Gastrocnemius medialis (tissue), 4 donors: ENCODE measurements at regions of chr2 and their contacts with region 1.

Region 1: DNA sequence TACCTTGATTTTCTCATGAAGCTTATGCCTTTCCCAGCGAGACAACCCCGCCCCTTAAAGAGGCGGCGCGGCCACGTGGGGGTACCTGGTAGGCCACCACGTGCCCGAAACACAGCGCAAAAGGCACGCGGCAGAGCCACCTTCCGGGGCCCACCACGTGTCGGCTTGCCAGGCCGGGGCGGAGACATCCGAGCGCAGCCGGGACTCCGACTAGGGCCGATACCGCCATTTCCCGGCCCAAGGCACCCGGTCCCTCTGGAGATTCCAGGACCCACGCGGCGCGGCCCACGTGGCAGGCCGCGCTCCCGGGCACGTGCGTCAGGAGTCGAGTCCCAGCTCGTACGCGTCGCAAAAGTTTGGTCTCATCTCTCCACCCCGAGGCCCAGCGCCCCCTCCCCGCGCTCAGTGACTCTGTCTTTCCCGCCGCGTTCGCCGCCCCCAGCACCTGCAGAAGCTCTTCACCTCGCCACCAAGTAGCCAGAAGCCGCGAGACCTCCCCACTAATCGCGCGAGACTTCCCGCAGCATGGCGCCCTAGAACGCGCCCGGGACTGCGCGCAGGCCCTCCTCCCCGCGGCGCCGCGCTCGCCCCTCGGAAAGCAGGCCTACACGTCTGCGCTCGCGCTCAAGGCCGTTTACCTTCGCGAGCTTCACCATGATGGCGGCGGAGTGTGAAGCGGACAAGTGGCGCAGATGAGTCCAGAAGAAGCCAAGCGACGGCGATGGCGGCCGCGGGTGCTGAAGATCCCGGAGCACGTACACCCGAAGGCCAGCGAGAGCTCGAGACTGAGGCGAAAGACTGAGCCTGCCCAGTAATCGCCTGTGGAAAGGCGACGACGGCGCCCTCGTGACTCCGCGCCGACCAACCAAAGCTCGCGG is at the start of gene NCL:
- DNase-seq: peak; percentile 66 to 81
- ATAC-seq: peak; percentile 90 to 92
- H3K4me3 ChIP-seq: peak within 1 kb of the TSS; percentile 75 to 99 (median 96)
- H3K27ac ChIP-seq: peak within 1 kb of the TSS; percentile 94 to 98 (median 96)
- H3K4me1 ChIP-seq: peaks cover 26 to 31% of the 10 kb centered on the region in 2 donors
- H3K27me3 ChIP-seq: no peaks in the 10 kb centered on the region
- CTCF ChIP-seq: no peak
- POLR2A ChIP-seq: peak; percentile 98
- total RNA-seq, gene NCL: 48.8 to 174 (median 124) TPM

Region 2: GRCh38 chr2:231056453-231057424 is 407.2 kb before region 1 on chr2 and contains the start of gene PSMD1:
- in situ Hi-C with region 1: no loop called
- intact Hi-C with region 1: loop called (anchors 5 kb)
- DNase-seq: peak; percentile 86 to 90
- ATAC-seq: peak; percentile 91 to 92
- H3K4me3 ChIP-seq: peak within 1 kb of the TSS; percentile 94 to 98 (median 96)
- H3K27ac ChIP-seq: peak within 1 kb of the TSS; percentile 93 to 96 (median 94)
- H3K4me1 ChIP-seq: peaks cover 41 to 49% of the 10 kb centered on the region in 2 donors
- H3K27me3 ChIP-seq: no peaks in the 10 kb centered on the region
- CTCF ChIP-seq: peak; percentile 88 to 96 (median 95)
- POLR2A ChIP-seq: peak; percentile 68 to 70
- total RNA-seq, gene PSMD1: 169 to 189 (median 182) TPM

Region 3: DNA sequence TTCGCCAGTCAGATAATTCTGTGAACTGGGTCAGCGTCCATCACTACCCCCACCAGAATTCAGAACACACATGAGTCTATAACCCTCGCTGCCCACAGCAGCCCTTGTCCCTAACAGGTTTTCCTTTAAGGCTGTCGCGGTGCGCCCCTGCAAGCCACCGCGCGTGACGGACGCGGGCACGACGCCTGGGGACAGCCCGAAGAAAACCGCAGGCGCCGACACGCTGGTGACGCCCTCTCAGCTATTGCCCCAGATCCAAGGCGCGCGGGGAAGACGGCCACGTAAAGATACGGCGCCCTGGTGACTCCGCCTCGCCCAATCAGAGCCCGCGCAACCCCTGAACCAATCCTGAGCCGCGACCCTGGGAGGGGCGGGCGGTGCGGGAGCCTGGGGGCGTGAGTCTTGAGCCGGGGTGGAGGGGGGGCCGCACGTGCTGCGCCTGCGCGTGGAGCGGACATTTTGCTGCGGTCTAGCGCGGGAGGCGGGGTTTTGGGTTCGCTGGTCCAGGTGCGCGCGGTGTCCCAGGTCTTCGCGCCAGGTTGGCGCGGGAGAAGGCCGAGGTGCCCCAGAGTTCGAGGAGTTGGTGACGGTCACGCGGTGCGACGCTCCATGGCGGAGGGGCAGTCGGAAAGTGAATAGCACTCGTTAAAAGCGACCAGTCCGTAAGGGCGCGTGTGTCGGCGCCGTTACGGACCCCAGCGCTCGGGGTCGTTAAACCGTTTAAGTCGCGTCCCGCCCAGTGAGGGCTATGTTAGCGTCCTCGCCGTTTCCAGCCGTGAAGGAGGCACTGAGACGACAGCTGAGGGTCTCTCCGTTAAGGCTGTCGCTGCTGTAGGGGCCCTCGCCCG is 50.4 kb after region 1 on chr2:
- in situ Hi-C with region 1: no loop called
- intact Hi-C with region 1: loop called (anchors 1 kb)
- DNase-seq: peak; percentile 98 to 99
- ATAC-seq: peak; percentile 93 to 95
- H3K4me3 ChIP-seq: peak overlapping the region; percentile 75 to 97 (median 89)
- H3K27ac ChIP-seq: peak overlapping the region; percentile 92 to 99 (median 96)
- H3K4me1 ChIP-seq: peaks cover 6 to 21% of the 10 kb centered on the region in 2 donors
- H3K27me3 ChIP-seq: no peaks in the 10 kb centered on the region
- CTCF ChIP-seq: no peak
- POLR2A ChIP-seq: peak; percentile 90 to 91

Region 4: GRCh38 chr2:231780909-231781797 is 317.2 kb after region 1 on chr2 and contains the start of gene PDE6D:
- in situ Hi-C with region 1: loop called in 1 of 4 experiments (anchors 10 kb)
- intact Hi-C with region 1: loop called (anchors 2 kb)
- DNase-seq: peak; percentile 97 to 99
- ATAC-seq: peak; percentile 98 to 99
- H3K4me3 ChIP-seq: peak within 1 kb of the TSS; percentile 75 to 99 (median 92)
- H3K27ac ChIP-seq: peak within 1 kb of the TSS; percentile 84 to 91 (median 90)
- H3K4me1 ChIP-seq: peaks cover 34 to 44% of the 10 kb centered on the region in 2 donors
- H3K27me3 ChIP-seq: no peaks in the 10 kb centered on the region
- CTCF ChIP-seq: no peak
- POLR2A ChIP-seq: peak; percentile 90 to 97
- total RNA-seq, gene PDE6D: 11.7 to 22.6 (median 17.6) TPM

Region 5: DNA sequence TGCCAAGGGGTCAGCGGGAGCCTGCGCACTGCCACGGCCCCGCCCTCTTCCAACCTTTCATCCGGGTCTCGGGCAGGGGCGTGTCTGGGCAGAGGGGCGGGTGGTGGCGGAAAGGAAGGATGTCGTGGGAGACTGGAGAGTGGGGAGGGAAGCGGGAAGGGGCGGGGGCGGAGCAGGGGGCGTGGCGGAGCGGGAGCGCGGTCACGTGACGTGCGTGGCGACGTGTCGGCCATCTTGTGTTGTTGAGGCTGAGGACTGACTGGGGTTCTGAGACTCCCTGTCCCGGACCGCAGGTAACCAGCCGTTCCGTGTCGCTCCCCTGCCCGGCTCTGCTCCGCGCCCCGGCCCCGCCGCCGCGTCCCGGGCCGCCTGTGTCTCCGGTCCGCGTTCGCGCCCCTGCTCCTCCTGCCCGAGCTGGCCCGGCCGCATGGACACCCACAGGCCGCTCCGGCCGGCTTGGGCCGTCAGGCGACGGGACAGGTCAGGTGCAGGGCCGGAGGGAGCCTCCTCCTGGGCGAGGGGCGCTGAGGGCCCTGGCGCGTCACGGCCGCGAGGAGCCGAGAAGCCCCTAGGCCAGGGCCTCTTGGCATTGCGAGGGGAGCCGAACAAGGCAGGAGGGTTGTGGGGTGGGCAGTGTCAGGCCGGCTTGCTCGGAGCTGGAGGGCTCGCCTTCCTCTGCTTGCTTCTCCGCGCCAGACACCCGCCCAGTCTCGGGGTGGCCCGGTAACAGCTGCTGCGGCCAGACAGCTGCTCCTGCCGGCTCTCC is 1233.3 kb after region 1 on chr2 and contains the start of gene GIGYF2:
- in situ Hi-C with region 1: no loop called
- intact Hi-C with region 1: loop called (anchors 5 kb)
- DNase-seq: peak; percentile 62 to 97
- ATAC-seq: peak; percentile 93 to 95
- H3K4me3 ChIP-seq: peak within 1 kb of the TSS; percentile 81 to 99 (median 94)
- H3K27ac ChIP-seq: peak within 1 kb of the TSS; percentile 98 to 100 (median 99)
- H3K4me1 ChIP-seq: peaks cover 39 to 41% of the 10 kb centered on the region in 2 donors
- H3K27me3 ChIP-seq: no peaks in the 10 kb centered on the region
- CTCF ChIP-seq: peak in 3 of 5 experiments; percentile 9 to 41 (median 10)
- POLR2A ChIP-seq: peak; percentile 63 to 77
- total RNA-seq, gene GIGYF2: 55.7 to 87.8 (median 66.1) TPM

Region 6: GRCh38 chr2:233026192-233026813 is 1562.4 kb after region 1 on chr2:
- in situ Hi-C with region 1: no loop called
- intact Hi-C with region 1: no loop called
- DNase-seq: no peak
- ATAC-seq: no peak
- H3K4me3 ChIP-seq: no peak overlapping the region
- H3K27ac ChIP-seq: no peak overlapping the region
- H3K4me1 ChIP-seq: no peaks in the 10 kb centered on the region
- H3K27me3 ChIP-seq: no peaks in the 10 kb centered on the region
- CTCF ChIP-seq: no peak
- POLR2A ChIP-seq: no peak